CD4-positive, alpha-beta memory T cell (primary cell): ENCODE measurements at regions of chr19 and their contacts with region 1.

Region 1: DNA sequence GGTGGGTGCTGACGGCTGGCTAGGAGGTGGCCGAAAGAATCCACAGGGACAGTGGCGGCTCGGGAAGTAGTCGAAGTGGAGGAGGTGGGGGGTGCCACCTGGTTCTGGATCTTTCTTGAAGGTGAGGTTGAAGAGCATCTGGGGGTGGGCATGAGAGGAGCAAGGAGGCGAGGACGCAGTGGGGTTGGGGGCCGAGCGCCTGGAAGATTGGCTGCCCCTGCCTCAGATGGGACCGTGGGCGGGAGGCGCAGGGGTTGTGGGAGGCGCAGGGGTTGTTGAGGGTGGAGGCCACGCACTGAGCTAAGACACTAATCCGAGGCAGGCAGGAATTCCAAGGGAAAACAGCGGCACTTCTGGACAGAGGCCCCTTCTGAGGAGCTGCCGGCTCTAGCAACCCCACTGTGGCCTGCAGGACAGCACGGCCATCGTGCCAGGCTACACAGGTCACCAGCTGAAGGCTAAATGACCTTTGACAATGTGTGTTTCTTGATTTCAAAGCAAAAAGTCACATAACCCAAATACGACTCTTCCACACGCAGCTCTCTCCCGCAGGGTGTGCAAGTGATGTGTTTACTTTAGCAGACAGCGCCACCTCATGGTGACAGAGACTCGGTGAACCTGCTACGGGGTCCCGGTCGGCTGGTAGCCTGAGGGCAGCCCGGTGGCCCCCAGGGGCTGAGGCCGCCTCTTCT is 44.1 kb upstream of the RANBP3 start:
- DNase-seq: peak; percentile 64 to 78 (median 73)
- H3K4me3 ChIP-seq: no peak overlapping the region
- H3K4me3 Mint-ChIP-seq: no peak overlapping the region
- H3K27ac ChIP-seq: no peak overlapping the region
- H3K27ac Mint-ChIP-seq: peak overlapping the region in 1 of 7 donors; percentile 57
- H3K4me1 ChIP-seq: peaks cover 4% of the 10 kb centered on the region
- H3K4me1 Mint-ChIP-seq: peaks cover 0 to 7% (median under 1%) of the 10 kb centered on the region in 4 donors
- H3K27me3 ChIP-seq: no peaks in the 10 kb centered on the region
- H3K27me3 Mint-ChIP-seq: peaks cover 0 to 2% of the 10 kb centered on the region in 2 donors

Region 2: DNA sequence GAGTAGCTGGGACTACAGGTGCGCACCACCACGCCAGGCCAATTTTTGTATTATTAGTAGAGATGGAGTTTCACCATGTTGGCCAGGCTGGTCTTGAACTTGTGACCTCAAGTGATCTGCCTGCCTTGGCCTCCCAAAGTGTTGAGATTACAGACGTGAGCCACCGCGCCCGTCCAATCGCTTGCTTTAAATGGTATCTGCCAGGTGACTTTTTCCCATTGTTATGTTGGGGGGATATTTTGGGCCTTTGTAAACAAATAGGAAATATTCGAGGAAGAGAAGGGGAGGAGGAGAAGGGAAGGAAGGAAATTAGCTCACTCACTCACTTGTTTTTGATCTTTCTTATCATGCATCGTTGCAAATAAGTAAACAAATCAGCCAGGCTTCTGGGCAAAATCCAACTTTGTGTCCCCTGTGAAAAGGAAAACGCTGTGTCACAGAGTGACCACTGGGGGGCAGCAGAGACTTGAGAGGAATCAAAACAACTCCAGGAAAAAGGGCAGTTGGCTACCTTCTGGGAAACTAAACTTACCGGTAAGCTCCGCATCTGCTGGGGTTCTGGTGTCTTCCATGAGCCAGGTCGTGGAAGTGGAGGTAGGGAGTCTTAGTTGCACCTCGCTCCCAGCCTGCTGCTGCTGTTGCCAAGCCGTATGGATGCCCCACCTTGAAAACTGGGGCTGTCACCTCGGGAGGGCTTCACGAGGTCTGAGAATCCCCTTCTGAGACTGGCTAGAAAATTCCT is 34.8 kb before region 1 on chr19:
- CTCF ChIA-PET with region 1: interaction called, 23 read pairs
- POLR2A ChIA-PET with region 1: no interaction called
- intact Hi-C with region 1: loop called (anchors 1 kb)
- DNase-seq: peak; percentile 57 to 71 (median 64)
- H3K4me3 ChIP-seq: peak overlapping the region in 1 of 2 donors; percentile 55
- H3K4me3 Mint-ChIP-seq: peak overlapping the region; percentile 70 to 87 (median 78)
- H3K27ac ChIP-seq: no peak overlapping the region
- H3K27ac Mint-ChIP-seq: peak overlapping the region in 5 of 7 donors; percentile 22 to 72 (median 36)
- H3K4me1 ChIP-seq: peaks cover 28% of the 10 kb centered on the region
- H3K4me1 Mint-ChIP-seq: peaks cover 9 to 24% (median 19%) of the 10 kb centered on the region in 4 donors
- H3K27me3 ChIP-seq: no peaks in the 10 kb centered on the region
- H3K27me3 Mint-ChIP-seq: no peaks in the 10 kb centered on the region

Region 3: GRCh38 chr19:6010107-6010506 is 11.9 kb before region 1 on chr19:
- CTCF ChIA-PET with region 1: interaction called, 10 read pairs
- POLR2A ChIA-PET with region 1: no interaction called
- intact Hi-C with region 1: no loop called
- DNase-seq: no peak
- H3K4me3 ChIP-seq: no peak overlapping the region
- H3K4me3 Mint-ChIP-seq: no peak overlapping the region
- H3K27ac ChIP-seq: no peak overlapping the region
- H3K27ac Mint-ChIP-seq: no peak overlapping the region
- H3K4me1 ChIP-seq: no peaks in the 10 kb centered on the region
- H3K4me1 Mint-ChIP-seq: no peaks in the 10 kb centered on the region
- H3K27me3 ChIP-seq: no peaks in the 10 kb centered on the region
- H3K27me3 Mint-ChIP-seq: no peaks in the 10 kb centered on the region

Region 4: GRCh38 chr19:6076675-6077463 is 54.8 kb after region 1 on chr19:
- CTCF ChIA-PET with region 1: no interaction called
- POLR2A ChIA-PET with region 1: no interaction called
- intact Hi-C with region 1: no loop called
- DNase-seq: no peak
- H3K4me3 ChIP-seq: no peak overlapping the region
- H3K4me3 Mint-ChIP-seq: no peak overlapping the region
- H3K27ac ChIP-seq: no peak overlapping the region
- H3K27ac Mint-ChIP-seq: peak overlapping the region in 1 of 7 donors; percentile 8
- H3K4me1 ChIP-seq: no peaks in the 10 kb centered on the region
- H3K4me1 Mint-ChIP-seq: peaks cover 0 to 1% (median 0%) of the 10 kb centered on the region in 4 donors
- H3K27me3 ChIP-seq: no peaks in the 10 kb centered on the region
- H3K27me3 Mint-ChIP-seq: no peaks in the 10 kb centered on the region